HepG2 (cell line): ENCODE measurements at regions of chr1 and their contacts with region 1.

Region 1: GRCh38 chr1:56803561-56804156 is 15.5 kb downstream of the FYB2 start:
- DNase-seq: peak; percentile 48
- ATAC-seq: peak; percentile 98
- H3K4me3 ChIP-seq: no peak overlapping the region
- H3K27ac ChIP-seq: no peak overlapping the region
- H3K4me1 ChIP-seq: no peaks in the 10 kb centered on the region
- H3K27me3 ChIP-seq: no peaks in the 10 kb centered on the region
- CTCF ChIP-seq: peak; percentile 79
- EP300 ChIP-seq: no peak
- POLR2A ChIP-seq: no peak
- RAD21 ChIP-seq: peak; percentile 65

Region 2: DNA sequence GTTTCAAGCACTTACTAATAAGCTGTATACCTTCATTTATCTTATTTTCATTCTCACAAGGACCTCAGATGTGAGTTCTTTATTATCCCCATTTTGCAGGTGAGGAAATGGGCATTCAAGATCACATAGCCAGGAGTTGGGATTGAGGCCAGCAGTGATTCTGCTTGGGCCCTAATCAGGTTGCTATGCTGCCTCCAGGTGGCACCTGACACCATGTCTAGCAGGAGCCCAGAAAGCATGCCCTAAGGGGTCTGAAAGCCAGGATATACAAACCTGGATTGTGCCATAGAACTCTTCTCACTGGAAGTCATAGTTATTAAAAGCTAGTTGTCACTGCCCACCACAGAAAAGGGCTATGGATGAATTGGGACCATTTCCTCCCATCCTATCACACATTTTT is 45.5 kb before region 1 on chr1:
- CTCF ChIA-PET with region 1: interaction called, 5 read pairs
- POLR2A ChIA-PET with region 1: no interaction called
- in situ Hi-C with region 1: no loop called
- intact Hi-C with region 1: loop called (anchors 1 kb)
- DNase-seq: peak; percentile 42
- ATAC-seq: peak; percentile 87
- H3K4me3 ChIP-seq: no peak overlapping the region
- H3K27ac ChIP-seq: no peak overlapping the region
- H3K4me1 ChIP-seq: peaks cover 20% of the 10 kb centered on the region
- H3K27me3 ChIP-seq: no peaks in the 10 kb centered on the region
- CTCF ChIP-seq: peak; percentile 79
- EP300 ChIP-seq: no peak
- POLR2A ChIP-seq: no peak
- RAD21 ChIP-seq: 0 out of 2 replicates have a peak, but pooled peaks have one; percentile 57

Region 3: GRCh38 chr1:56780826-56781225 is 22.8 kb before region 1 on chr1:
- CTCF ChIA-PET with region 1: no interaction called
- POLR2A ChIA-PET with region 1: interaction called, 3 read pairs
- in situ Hi-C with region 1: no loop called
- intact Hi-C with region 1: loop called (anchors 2 kb)
- DNase-seq: no peak
- ATAC-seq: peak; percentile 50
- H3K4me3 ChIP-seq: peak overlapping the region in 1 of 3 experiments; percentile 8; a peak in 1 of 6 replicates
- H3K27ac ChIP-seq: peak overlapping the region; percentile 63
- H3K4me1 ChIP-seq: peaks cover 19% of the 10 kb centered on the region
- H3K27me3 ChIP-seq: no peaks in the 10 kb centered on the region
- CTCF ChIP-seq: no peak
- EP300 ChIP-seq: no peak
- POLR2A ChIP-seq: no peak
- RAD21 ChIP-seq: no peak

Region 4: GRCh38 chr1:56821140-56821797 is 17.6 kb after region 1 on chr1:
- CTCF ChIA-PET with region 1: interaction called, 6 read pairs
- POLR2A ChIA-PET with region 1: interaction called, 4 read pairs
- in situ Hi-C with region 1: no loop called
- intact Hi-C with region 1: loop called (anchors 1 kb)
- DNase-seq: peak; percentile 73
- ATAC-seq: peak; percentile 63
- H3K4me3 ChIP-seq: peak overlapping the region in 1 of 3 experiments; percentile 32; a peak in 2 of 6 replicates
- H3K27ac ChIP-seq: peak overlapping the region; percentile 52
- H3K4me1 ChIP-seq: peaks cover 67% of the 10 kb centered on the region
- H3K27me3 ChIP-seq: no peaks in the 10 kb centered on the region
- CTCF ChIP-seq: peak; percentile 97
- EP300 ChIP-seq: no peak
- POLR2A ChIP-seq: no peak
- RAD21 ChIP-seq: peak; percentile 94